CD4-positive, alpha-beta memory T cell (primary cell): ENCODE measurements at regions of chr12 and their contacts with region 1.

Region 1: GRCh38 chr12:21690704-21691368 is 33.2 kb upstream of the LDHB start:
- DNase-seq: peak in 3 of 5 donors; percentile 42 to 45 (median 45)
- H3K4me3 ChIP-seq: no peak overlapping the region
- H3K4me3 Mint-ChIP-seq: peak overlapping the region in 7 of 8 donors; percentile 2 to 77 (median 65)
- H3K27ac ChIP-seq: no peak overlapping the region
- H3K27ac Mint-ChIP-seq: peak overlapping the region; percentile 21 to 91 (median 83)
- H3K4me1 ChIP-seq: peaks cover 28% of the 10 kb centered on the region
- H3K4me1 Mint-ChIP-seq: peaks cover 24 to 32% (median 30%) of the 10 kb centered on the region in 4 donors
- H3K27me3 ChIP-seq: no peaks in the 10 kb centered on the region
- H3K27me3 Mint-ChIP-seq: no peaks in the 10 kb centered on the region

Region 2: GRCh38 chr12:21527451-21528180 is 163.2 kb before region 1 on chr12:
- CTCF ChIA-PET with region 1: no interaction called
- POLR2A ChIA-PET with region 1: no interaction called
- intact Hi-C with region 1: loop called (anchors 5 kb)
- DNase-seq: peak; percentile 52 to 66 (median 58)
- H3K4me3 ChIP-seq: peak overlapping the region; percentile 27 to 61
- H3K4me3 Mint-ChIP-seq: peak overlapping the region; percentile 81 to 89 (median 84)
- H3K27ac ChIP-seq: no peak overlapping the region
- H3K27ac Mint-ChIP-seq: no peak overlapping the region
- H3K4me1 ChIP-seq: peaks cover 12% of the 10 kb centered on the region
- H3K4me1 Mint-ChIP-seq: peaks cover 4 to 9% (median 5%) of the 10 kb centered on the region in 4 donors
- H3K27me3 ChIP-seq: peaks cover 8% of the 10 kb centered on the region
- H3K27me3 Mint-ChIP-seq: peaks cover 17 to 21% of the 10 kb centered on the region in 2 donors